ENCODE measurements at regions of chr20 and their contacts with region 1.

Region 1: GRCh38 chr20:63009045-63009961 is 2.5 kb upstream of the BHLHE23 start:
- DNase-seq: peak in 9 of 10 donors; percentile 61 to 84 (median 72)
- H3K4me3 ChIP-seq: peak overlapping the region in 26 of 59 donors; percentile 2 to 49 (median 24)
- H3K27ac ChIP-seq: no peak overlapping the region
- H3K27me3 ChIP-seq: peaks cover 7 to 100% (median 88%) of the 10 kb centered on the region in 45 donors
- CTCF ChIP-seq: peak; percentile 70 to 99 (median 95)

Region 2: GRCh38 chr20:62500237-62500864 is 509.0 kb before region 1 on chr20:
- intact Hi-C with region 1: loop called in 1 of 2 experiments (anchors 10 kb)
- DNase-seq: peak in 9 of 10 donors; percentile 49 to 77 (median 66)
- H3K4me3 ChIP-seq: no peak overlapping the region
- H3K27ac ChIP-seq: no peak overlapping the region
- H3K27me3 ChIP-seq: peaks cover 0 to 18% (median 6%) of the 10 kb centered on the region in 45 donors
- CTCF ChIP-seq: peak; percentile 33 to 88 (median 78)

Region 3: DNA sequence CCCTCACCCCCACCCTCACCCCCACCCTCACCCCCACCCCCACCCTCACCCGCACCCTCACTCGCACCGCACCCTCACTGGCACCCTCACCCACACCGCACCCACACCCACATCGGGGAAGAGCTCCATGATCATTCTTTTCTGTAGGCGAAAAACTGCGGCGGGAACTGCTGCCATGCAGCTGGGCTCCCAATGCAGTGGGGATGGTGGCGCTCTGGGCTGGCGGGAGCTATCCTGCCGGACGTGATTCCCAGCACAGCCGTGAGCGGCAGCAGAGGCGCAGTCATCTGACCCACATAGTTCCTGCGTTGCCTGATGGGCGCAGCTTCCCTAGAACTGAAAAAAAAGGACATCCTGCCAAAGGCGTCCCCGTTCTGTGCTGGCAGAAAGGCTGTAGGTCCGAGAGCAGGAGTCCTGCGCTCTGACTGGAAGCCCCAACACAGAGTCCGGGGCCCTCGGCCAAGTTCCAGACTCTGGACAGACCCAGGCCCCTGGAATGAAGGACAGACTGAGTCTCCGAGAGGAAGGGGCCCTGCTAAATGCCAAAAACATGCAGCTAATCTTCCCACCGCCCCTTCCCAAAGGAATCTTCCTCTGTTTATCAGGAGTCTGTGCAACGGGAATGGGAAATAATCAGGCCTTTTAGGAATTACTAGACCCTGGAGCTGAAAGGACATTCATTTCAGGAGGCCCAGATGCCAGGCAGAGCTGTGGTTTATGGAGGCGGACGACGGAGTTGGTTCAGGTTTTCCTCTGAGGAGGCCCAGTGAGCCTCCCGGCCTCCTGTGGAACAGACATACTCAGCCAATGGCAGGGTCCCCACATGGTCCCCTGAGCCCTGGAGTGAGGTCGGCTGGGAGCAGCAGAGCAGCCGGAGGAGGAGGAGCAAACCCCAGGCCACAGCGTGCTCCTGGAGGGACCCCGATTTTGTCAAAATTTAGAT is 133.6 kb before region 1 on chr20:
- intact Hi-C with region 1: loop called in 1 of 2 experiments (anchors 5 kb)
- DNase-seq: peak; percentile 69 to 91 (median 85)
- H3K4me3 ChIP-seq: peak overlapping the region in 52 of 59 donors; percentile 7 to 57 (median 38)
- H3K27ac ChIP-seq: peak overlapping the region; percentile 48 to 98 (median 87)
- H3K27me3 ChIP-seq: no peaks in the 10 kb centered on the region
- CTCF ChIP-seq: peak in 54 of 56 donors; percentile 14 to 68 (median 52)

Region 4: GRCh38 chr20:62900052-62900691 is 109.1 kb before region 1 on chr20:
- intact Hi-C with region 1: loop called (anchors 2 kb)
- DNase-seq: peak; percentile 56 to 87 (median 80)
- H3K4me3 ChIP-seq: peak overlapping the region in 18 of 59 donors; percentile 0 to 38 (median 12)
- H3K27ac ChIP-seq: peak overlapping the region in 35 of 59 donors; percentile 1 to 67 (median 46)
- H3K27me3 ChIP-seq: no peaks in the 10 kb centered on the region
- CTCF ChIP-seq: peak; percentile 59 to 96 (median 87)

Region 5: GRCh38 chr20:62972270-62973032 is 36.9 kb before region 1 on chr20:
- intact Hi-C with region 1: loop called (anchors 1 to 2 kb)
- DNase-seq: peak; percentile 74 to 90 (median 85)
- H3K4me3 ChIP-seq: peak overlapping the region in 37 of 59 donors; percentile 5 to 53 (median 34)
- H3K27ac ChIP-seq: no peak overlapping the region
- H3K27me3 ChIP-seq: peaks cover 0 to 67% (median 36%) of the 10 kb centered on the region in 45 donors
- CTCF ChIP-seq: peak; percentile 39 to 92 (median 83)

Measured in dorsolateral prefrontal cortex (tissue), 120 donors.